CD8-positive, alpha-beta T cell (primary cell): ENCODE measurements at regions of chr3 and their contacts with region 1.

Region 1: GRCh38 chr3:129176051-129176450 is 7.6 kb downstream of the CNBP start:
- DNase-seq: no peak
- ATAC-seq: no peak
- H3K4me3 ChIP-seq: no peak overlapping the region
- H3K4me3 Mint-ChIP-seq: peak overlapping the region; percentile 26
- H3K27ac ChIP-seq: peak overlapping the region in 1 of 2 experiments; percentile 24
- H3K27ac Mint-ChIP-seq: peak overlapping the region; percentile 56
- H3K4me1 ChIP-seq: peaks cover 85% of the 10 kb centered on the region
- H3K4me1 Mint-ChIP-seq: peaks cover 90% of the 10 kb centered on the region
- H3K27me3 ChIP-seq: no peaks in the 10 kb centered on the region
- H3K27me3 Mint-ChIP-seq: no peaks in the 10 kb centered on the region
- CTCF ChIP-seq: no peak

Region 2: GRCh38 chr3:128650096-128651050 is 525.7 kb before region 1 on chr3 and contains the start of gene RPN1:
- CTCF ChIA-PET with region 1: no interaction called
- POLR2A ChIA-PET with region 1: no interaction called
- intact Hi-C with region 1: loop called (anchors 5 to 10 kb)
- DNase-seq: peak; percentile 90 to 97 (median 95)
- ATAC-seq: peak; percentile 96
- H3K4me3 ChIP-seq: peak within 1 kb of the TSS; percentile 97
- H3K4me3 Mint-ChIP-seq: peak within 1 kb of the TSS; percentile 82
- H3K27ac ChIP-seq: peak within 1 kb of the TSS; percentile 95 to 96
- H3K27ac Mint-ChIP-seq: peak within 1 kb of the TSS; percentile 88
- H3K4me1 ChIP-seq: peaks cover 24% of the 10 kb centered on the region
- H3K4me1 Mint-ChIP-seq: peaks cover 47% of the 10 kb centered on the region
- H3K27me3 ChIP-seq: no peaks in the 10 kb centered on the region
- H3K27me3 Mint-ChIP-seq: no peaks in the 10 kb centered on the region
- CTCF ChIP-seq: no peak
- total RNA-seq, gene RPN1: 65.7 to 76.5 TPM

Region 3: DNA sequence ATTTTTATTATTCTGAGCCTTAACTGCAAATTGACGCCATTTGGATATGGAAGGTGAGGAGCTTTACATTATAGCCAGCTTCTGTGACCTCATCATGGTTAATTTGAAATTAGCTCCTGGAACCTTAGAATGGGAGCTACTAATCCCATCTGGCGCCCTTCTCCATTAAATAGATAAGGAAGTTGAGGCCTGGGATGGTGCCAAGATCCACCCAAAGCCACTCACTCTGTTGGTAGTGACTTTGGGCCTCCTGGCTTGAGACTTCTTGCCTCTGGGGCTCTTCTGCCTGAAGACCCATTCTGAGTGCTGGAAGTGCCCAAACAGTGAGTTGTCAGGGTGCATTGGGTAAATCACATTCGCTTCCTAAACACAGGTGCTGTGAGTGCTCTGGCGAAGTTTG is 90.6 kb after region 1 on chr3:
- CTCF ChIA-PET with region 1: no interaction called
- POLR2A ChIA-PET with region 1: no interaction called
- intact Hi-C with region 1: loop called in 1 of 2 experiments (anchors 1 kb)
- DNase-seq: no peak
- ATAC-seq: no peak
- H3K4me3 ChIP-seq: no peak overlapping the region
- H3K4me3 Mint-ChIP-seq: no peak overlapping the region
- H3K27ac ChIP-seq: no peak overlapping the region
- H3K27ac Mint-ChIP-seq: no peak overlapping the region
- H3K4me1 ChIP-seq: no peaks in the 10 kb centered on the region
- H3K4me1 Mint-ChIP-seq: peaks cover 1% of the 10 kb centered on the region
- H3K27me3 ChIP-seq: no peaks in the 10 kb centered on the region
- H3K27me3 Mint-ChIP-seq: no peaks in the 10 kb centered on the region
- CTCF ChIP-seq: no peak